Stomach (tissue), 19 donors: ENCODE measurements at regions of chr6 and their contacts with region 1.

Region 1: GRCh38 chr6:28124102-28124970 is at the start of gene ZSCAN16:
- DNase-seq: peak; percentile 84 to 95
- H3K4me3 ChIP-seq: peak within 1 kb of the TSS; percentile 64 to 78 (median 73)
- H3K27ac ChIP-seq: peak within 1 kb of the TSS; percentile 73 to 82 (median 75)
- H3K4me1 ChIP-seq: peaks cover 7 to 26% (median 21%) of the 10 kb centered on the region in 4 donors
- H3K27me3 ChIP-seq: no peaks in the 10 kb centered on the region
- CTCF ChIP-seq: no peak
- EP300 ChIP-seq: no peak
- POLR2A ChIP-seq: no peak
- total RNA-seq, gene ZSCAN16: 3.8 to 9.0 (median 4.9) TPM in 4 of 5 donors, not detected in the other

Region 2: DNA sequence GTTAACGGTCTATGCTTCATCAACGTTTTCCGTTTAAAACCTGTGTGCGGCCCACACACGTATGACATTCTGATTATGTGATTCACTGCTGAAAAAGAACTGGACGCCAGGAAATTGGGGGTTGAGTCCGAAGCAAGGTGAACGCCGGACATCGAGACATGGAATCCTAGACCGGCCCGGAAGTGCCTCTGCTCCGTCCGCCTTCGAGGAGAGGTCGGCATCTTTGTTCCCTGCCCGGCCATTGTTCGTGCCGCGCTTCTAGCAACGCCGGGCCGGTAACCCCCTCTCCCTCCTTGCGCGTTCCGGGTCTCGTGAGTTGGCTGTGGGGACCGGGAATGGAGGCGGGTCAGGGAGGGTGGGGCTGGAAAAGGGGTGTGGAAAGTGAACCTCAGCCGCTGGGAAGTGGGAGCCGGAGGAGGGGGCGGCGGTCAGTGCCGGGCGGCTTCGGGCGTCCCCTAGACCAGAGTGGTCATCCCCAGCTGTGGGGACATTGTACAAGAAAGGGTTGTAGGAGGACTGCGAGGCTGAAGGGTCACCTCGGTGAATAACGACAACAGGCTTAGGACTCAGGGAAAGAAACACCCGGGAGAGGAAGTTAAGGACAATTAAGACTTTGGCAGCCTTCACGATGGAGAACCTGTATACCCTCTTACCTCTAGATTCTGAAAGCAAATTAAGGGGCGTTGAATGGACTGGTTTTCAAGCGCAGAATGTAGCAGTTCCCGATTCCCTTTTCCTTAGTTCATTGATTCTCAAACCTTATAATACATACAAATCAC is 100.9 kb after region 1 on chr6 and contains the start of gene ZSCAN9:
- intact Hi-C with region 1: loop called (anchors 10 kb)
- DNase-seq: peak; percentile 83 to 95
- H3K4me3 ChIP-seq: peak within 1 kb of the TSS; percentile 61 to 80 (median 77)
- H3K27ac ChIP-seq: peak within 1 kb of the TSS; percentile 76 to 88 (median 86)
- H3K4me1 ChIP-seq: peaks cover 0 to 27% (median 18%) of the 10 kb centered on the region in 4 donors
- H3K27me3 ChIP-seq: peaks cover 0 to 26% (median 6%) of the 10 kb centered on the region in 3 donors
- CTCF ChIP-seq: no peak
- EP300 ChIP-seq: no peak
- POLR2A ChIP-seq: no peak
- total RNA-seq, gene ZSCAN9: 1.8 to 37.9 (median 15.1) TPM

Region 3: GRCh38 chr6:28322661-28323060 is 198.3 kb after region 1 on chr6:
- intact Hi-C with region 1: no loop called
- DNase-seq: no peak
- H3K4me3 ChIP-seq: no peak overlapping the region
- H3K27ac ChIP-seq: no peak overlapping the region
- H3K4me1 ChIP-seq: no peaks in the 10 kb centered on the region
- H3K27me3 ChIP-seq: no peaks in the 10 kb centered on the region
- CTCF ChIP-seq: no peak
- EP300 ChIP-seq: no peak
- POLR2A ChIP-seq: no peak